T-cell (primary cell): ENCODE measurements at regions of chr1 and their contacts with region 1.

Region 1: DNA sequence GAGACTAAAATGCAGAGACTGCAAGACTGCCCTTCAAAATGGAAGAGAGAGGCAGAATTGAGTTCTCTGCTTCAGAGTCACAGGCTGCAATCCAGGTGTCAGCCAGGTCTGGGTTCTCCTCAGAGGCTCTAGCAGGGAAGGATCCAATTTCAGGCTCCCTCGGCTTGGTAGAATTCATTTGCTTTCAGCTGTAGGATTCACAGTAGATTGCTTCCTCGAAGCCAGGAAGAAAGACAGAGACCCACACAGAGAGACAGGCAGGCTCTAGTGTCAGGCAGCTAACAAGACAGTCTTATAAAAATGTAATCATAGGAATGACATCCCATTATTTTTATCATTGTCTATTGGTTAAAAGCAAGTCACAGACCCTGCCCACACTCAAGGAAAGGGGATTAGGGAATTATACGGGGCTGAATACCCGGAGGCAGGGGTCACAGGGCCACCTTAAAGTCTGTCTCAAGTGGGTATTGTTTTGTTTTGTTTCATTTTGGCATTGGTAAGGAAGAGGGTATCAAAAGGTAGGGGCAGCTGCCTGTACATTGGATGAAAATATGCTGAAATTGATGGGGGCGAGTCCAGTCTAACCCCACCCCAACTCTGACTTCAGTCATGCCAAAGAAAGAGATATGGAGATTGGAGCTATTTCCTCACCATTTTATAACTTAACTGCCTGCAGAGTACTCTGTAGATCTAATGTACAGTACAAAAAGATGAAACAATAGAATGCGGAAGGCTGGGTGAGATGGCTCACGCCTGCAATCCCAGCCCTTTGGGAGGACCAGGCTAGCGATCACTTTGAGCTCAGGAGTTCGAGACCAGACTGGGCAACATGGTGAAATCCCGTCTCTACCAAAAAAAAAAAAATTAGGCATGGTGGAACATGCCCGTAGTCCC is 9.5 kb upstream of the TBCE start:
- DNase-seq: no peak
- ATAC-seq: no peak
- H3K4me3 ChIP-seq: no peak overlapping the region
- H3K4me3 Mint-ChIP-seq: no peak overlapping the region
- H3K27ac ChIP-seq: no peak overlapping the region
- H3K27ac Mint-ChIP-seq: no peak overlapping the region
- H3K4me1 ChIP-seq: no peaks in the 10 kb centered on the region
- H3K4me1 Mint-ChIP-seq: peaks cover 0 to 2% (median 0%) of the 10 kb centered on the region in 3 donors
- H3K27me3 ChIP-seq: peaks cover 0 to 3% of the 10 kb centered on the region in 2 experiments
- H3K27me3 Mint-ChIP-seq: no peaks in the 10 kb centered on the region

Region 2: DNA sequence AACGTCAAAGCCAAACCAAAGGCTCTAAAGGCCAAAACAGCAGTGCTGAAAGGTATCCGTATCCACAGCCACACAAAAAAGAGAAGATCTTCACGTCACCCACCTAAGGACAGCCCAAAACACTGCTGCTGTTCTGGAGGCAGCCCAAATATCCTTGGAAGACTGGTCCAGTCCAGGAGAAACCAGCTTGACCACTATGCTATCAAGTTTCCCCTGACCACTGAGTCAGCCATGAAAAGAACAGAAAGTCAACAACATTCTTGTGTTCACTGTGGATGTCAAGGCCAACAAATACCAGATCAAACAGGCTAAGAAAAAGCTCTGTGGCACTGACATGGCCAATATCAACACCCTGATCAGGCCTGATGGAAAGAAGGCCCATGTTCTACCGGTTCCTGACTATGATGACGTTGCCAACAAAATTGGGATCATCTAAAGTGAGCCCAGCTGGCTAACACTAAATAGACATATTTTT is 61.8 kb before region 1 on chr1:
- CTCF ChIA-PET with region 1: no interaction called
- POLR2A ChIA-PET with region 1: no interaction called
- DNase-seq: no peak
- ATAC-seq: no peak
- H3K4me3 ChIP-seq: no peak overlapping the region
- H3K4me3 Mint-ChIP-seq: peak overlapping the region in 1 of 3 donors; percentile 6
- H3K27ac ChIP-seq: peak overlapping the region; percentile 85
- H3K27ac Mint-ChIP-seq: peak overlapping the region; percentile 29 to 89
- H3K4me1 ChIP-seq: peaks cover 33 to 55% of the 10 kb centered on the region in 2 experiments
- H3K4me1 Mint-ChIP-seq: peaks cover 65 to 71% (median 70%) of the 10 kb centered on the region in 3 donors
- H3K27me3 ChIP-seq: no peaks in the 10 kb centered on the region
- H3K27me3 Mint-ChIP-seq: no peaks in the 10 kb centered on the region

Region 3: GRCh38 chr1:235317168-235317567 is 40.6 kb before region 1 on chr1:
- CTCF ChIA-PET with region 1: no interaction called
- POLR2A ChIA-PET with region 1: interaction called in 1 of 2 experiments, 10 read pairs
- DNase-seq: no peak
- ATAC-seq: no peak
- H3K4me3 ChIP-seq: no peak overlapping the region
- H3K4me3 Mint-ChIP-seq: peak overlapping the region in 2 of 3 donors; percentile 22 to 53
- H3K27ac ChIP-seq: no peak overlapping the region
- H3K27ac Mint-ChIP-seq: peak overlapping the region; percentile 62 to 67
- H3K4me1 ChIP-seq: peaks cover 28 to 42% of the 10 kb centered on the region in 2 experiments
- H3K4me1 Mint-ChIP-seq: peaks cover 82 to 85% (median 83%) of the 10 kb centered on the region in 3 donors
- H3K27me3 ChIP-seq: no peaks in the 10 kb centered on the region
- H3K27me3 Mint-ChIP-seq: no peaks in the 10 kb centered on the region

Region 4: DNA sequence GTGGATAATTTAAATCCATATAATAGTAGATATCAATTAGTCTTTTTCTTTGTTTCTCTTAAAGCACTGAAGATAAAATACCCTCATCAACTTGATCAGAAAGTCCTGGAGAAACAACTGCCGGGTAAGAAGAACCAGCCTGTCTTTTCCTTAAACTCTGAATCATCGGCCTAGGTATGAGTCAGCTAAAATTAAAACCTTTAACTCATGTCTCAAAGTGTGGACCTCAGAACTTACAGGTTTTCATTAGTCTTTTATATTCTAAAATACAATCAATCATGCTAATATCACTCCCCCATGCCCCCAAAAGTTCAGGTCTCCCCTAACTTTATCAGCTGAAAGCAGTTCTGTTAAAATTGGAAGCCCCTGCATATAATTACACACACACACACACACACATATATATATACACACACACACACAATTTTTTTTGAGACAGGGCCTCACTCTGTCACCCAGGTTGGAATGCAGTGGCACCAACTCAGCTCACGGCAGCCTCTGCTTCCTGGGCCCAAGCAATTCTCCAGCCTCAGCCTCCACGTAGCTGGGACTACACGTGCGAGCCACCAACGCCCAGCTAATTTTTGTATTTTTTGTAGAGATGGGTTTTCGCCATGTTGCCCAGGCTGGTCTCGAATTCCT is 85.2 kb after region 1 on chr1:
- CTCF ChIA-PET with region 1: no interaction called
- POLR2A ChIA-PET with region 1: no interaction called
- DNase-seq: no peak
- ATAC-seq: no peak
- H3K4me3 ChIP-seq: no peak overlapping the region
- H3K4me3 Mint-ChIP-seq: no peak overlapping the region
- H3K27ac ChIP-seq: no peak overlapping the region
- H3K27ac Mint-ChIP-seq: peak overlapping the region in 1 of 2 donors; percentile 55
- H3K4me1 ChIP-seq: no peaks in the 10 kb centered on the region
- H3K4me1 Mint-ChIP-seq: no peaks in the 10 kb centered on the region
- H3K27me3 ChIP-seq: no peaks in the 10 kb centered on the region
- H3K27me3 Mint-ChIP-seq: no peaks in the 10 kb centered on the region